Natural killer cell (primary cell): ENCODE measurements at regions of chr13 and their contacts with region 1.

Region 1: GRCh38 chr13:46492946-46493345 is 60.0 kb upstream of the LRCH1 start:
- DNase-seq: peak in 1 of 2 donors; percentile 62
- ATAC-seq: no peak
- H3K4me3 ChIP-seq: no peak overlapping the region
- H3K4me3 Mint-ChIP-seq: no peak overlapping the region
- H3K27ac ChIP-seq: no peak overlapping the region
- H3K27ac Mint-ChIP-seq: no peak overlapping the region
- H3K4me1 ChIP-seq: no peaks in the 10 kb centered on the region
- H3K4me1 Mint-ChIP-seq: no peaks in the 10 kb centered on the region
- H3K27me3 ChIP-seq: no peaks in the 10 kb centered on the region
- H3K27me3 Mint-ChIP-seq: peaks cover 7 to 11% of the 10 kb centered on the region in 2 donors
- CTCF ChIP-seq: peak; percentile 83

Region 2: DNA sequence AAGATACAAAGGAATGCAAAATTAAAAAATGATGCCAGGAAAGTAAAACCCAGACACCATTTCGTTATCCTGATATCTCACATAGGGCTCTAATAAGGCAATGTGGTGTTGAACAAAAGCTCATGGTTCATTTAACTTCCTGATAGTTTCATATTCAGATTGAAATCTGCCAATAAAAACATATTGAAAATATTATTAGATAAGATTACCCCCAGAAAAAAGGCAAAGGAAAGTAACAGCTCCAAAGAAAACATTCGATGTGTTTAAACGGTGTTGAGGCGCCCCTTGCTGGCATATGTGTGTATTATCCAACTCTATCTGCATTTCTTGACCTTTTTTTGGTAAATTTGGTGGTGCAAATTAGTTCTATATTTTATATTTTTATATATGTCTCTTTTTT is 228.1 kb after region 1 on chr13:
- intact Hi-C with region 1: loop called (anchors 1 kb)
- DNase-seq: peak; percentile 31 to 73
- ATAC-seq: peak; percentile 58 to 68 (median 64)
- H3K4me3 ChIP-seq: no peak overlapping the region
- H3K4me3 Mint-ChIP-seq: no peak overlapping the region
- H3K27ac ChIP-seq: no peak overlapping the region
- H3K27ac Mint-ChIP-seq: no peak overlapping the region
- H3K4me1 ChIP-seq: peaks cover under 1% of the 10 kb centered on the region
- H3K4me1 Mint-ChIP-seq: peaks cover 16 to 19% of the 10 kb centered on the region in 2 donors
- H3K27me3 ChIP-seq: no peaks in the 10 kb centered on the region
- H3K27me3 Mint-ChIP-seq: no peaks in the 10 kb centered on the region
- CTCF ChIP-seq: peak; percentile 79

Region 3: DNA sequence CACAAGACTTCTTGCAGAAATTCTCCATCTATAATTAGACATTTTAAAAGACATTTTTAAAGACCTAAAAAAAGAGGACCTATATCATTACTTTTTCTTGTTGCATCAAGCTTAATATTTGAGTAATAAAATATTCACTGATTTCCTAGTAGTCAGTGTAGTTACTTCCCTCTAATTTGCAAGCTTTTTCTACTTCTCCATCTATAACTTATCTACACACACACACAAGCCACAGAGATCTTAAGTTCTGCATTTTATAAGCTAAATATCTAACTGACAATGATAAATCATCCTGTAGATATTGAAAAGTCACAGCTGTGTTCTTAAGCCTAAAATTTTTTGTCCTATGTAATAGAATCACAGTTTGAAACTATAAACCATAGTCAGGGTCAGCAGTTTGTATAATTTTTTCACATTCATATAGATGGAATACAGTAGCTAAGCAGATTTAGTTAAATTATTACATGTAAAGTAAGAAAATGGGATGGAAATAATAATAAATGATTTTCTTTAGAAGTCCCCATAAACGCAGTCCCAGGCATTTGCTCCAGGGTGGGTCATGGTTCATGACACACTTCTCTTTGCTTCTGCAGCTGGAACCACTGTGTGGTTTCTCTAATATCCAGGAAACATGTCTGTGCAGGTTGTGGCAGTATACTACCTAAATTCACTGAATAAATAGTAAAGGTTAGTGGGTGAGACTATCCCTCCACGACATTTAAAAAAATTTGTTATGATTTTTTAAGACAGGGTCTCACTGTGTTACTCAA is 243.8 kb after region 1 on chr13:
- intact Hi-C with region 1: no loop called
- DNase-seq: no peak
- ATAC-seq: no peak
- H3K4me3 ChIP-seq: no peak overlapping the region
- H3K4me3 Mint-ChIP-seq: no peak overlapping the region
- H3K27ac ChIP-seq: no peak overlapping the region
- H3K27ac Mint-ChIP-seq: no peak overlapping the region
- H3K4me1 ChIP-seq: no peaks in the 10 kb centered on the region
- H3K4me1 Mint-ChIP-seq: no peaks in the 10 kb centered on the region
- H3K27me3 ChIP-seq: no peaks in the 10 kb centered on the region
- H3K27me3 Mint-ChIP-seq: no peaks in the 10 kb centered on the region
- CTCF ChIP-seq: no peak

Region 4: DNA sequence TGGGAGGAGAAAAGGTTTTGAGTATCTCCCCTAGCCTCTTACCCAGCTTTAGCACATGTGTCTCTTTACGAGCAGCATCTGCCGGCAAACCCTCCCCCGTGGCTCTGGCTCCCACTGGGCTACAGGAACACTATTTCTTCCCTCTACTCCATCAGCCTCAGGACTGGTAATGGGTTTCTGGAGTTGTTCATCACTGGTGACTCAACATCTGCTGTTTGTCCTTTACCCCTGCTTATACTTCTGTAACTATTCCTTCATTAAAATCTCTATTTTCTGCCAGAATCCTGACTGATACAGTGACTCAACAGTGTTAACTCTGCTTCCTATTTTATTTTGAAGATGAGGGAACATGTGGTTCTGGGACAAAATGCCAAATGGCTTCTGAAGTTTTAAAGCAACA is 841.2 kb after region 1 on chr13:
- intact Hi-C with region 1: no loop called
- DNase-seq: no peak
- ATAC-seq: no peak
- H3K4me3 ChIP-seq: no peak overlapping the region
- H3K4me3 Mint-ChIP-seq: no peak overlapping the region
- H3K27ac ChIP-seq: no peak overlapping the region
- H3K27ac Mint-ChIP-seq: no peak overlapping the region
- H3K4me1 ChIP-seq: no peaks in the 10 kb centered on the region
- H3K4me1 Mint-ChIP-seq: no peaks in the 10 kb centered on the region
- H3K27me3 ChIP-seq: no peaks in the 10 kb centered on the region
- H3K27me3 Mint-ChIP-seq: no peaks in the 10 kb centered on the region
- CTCF ChIP-seq: no peak